Activated CD4-positive, alpha-beta T cell treated with anti-CD3 and anti-CD28 coated beads, Interleukin-2, amount 10 ng/mL, durations not matched to agents 24 days and 14 days (primary cell): ENCODE measurements at regions of chr20 and their contacts with region 1.

Region 1: GRCh38 chr20:2955257-2955970 is 82.1 kb downstream of the PTPRA start:
- DNase-seq: no peak
- H3K4me3 Mint-ChIP-seq: no peak overlapping the region
- H3K27ac Mint-ChIP-seq: peak overlapping the region; percentile 73
- H3K4me1 Mint-ChIP-seq: peaks cover 21% of the 10 kb centered on the region
- H3K27me3 Mint-ChIP-seq: no peaks in the 10 kb centered on the region

Region 2: GRCh38 chr20:2914160-2914559 is 41.3 kb before region 1 on chr20:
- intact Hi-C with region 1: loop called (anchors 5 kb)
- DNase-seq: no peak
- H3K4me3 Mint-ChIP-seq: no peak overlapping the region
- H3K27ac Mint-ChIP-seq: no peak overlapping the region
- H3K4me1 Mint-ChIP-seq: peaks cover 6% of the 10 kb centered on the region
- H3K27me3 Mint-ChIP-seq: no peaks in the 10 kb centered on the region

Region 3: GRCh38 chr20:3330046-3330741 is 374.8 kb after region 1 on chr20:
- intact Hi-C with region 1: no loop called
- DNase-seq: no peak
- H3K4me3 Mint-ChIP-seq: no peak overlapping the region
- H3K27ac Mint-ChIP-seq: no peak overlapping the region
- H3K4me1 Mint-ChIP-seq: peaks cover 7% of the 10 kb centered on the region
- H3K27me3 Mint-ChIP-seq: no peaks in the 10 kb centered on the region